ENCODE measurements at regions of chr12 and their contacts with region 1.

Region 1: GRCh38 chr12:68510397-68510796 is 100.3 kb upstream of the RAP1B start:
- DNase-seq: no peak
- ATAC-seq: no peak
- H3K4me3 ChIP-seq: no peak overlapping the region
- H3K4me3 Mint-ChIP-seq: no peak overlapping the region
- H3K27ac ChIP-seq: no peak overlapping the region
- H3K27ac Mint-ChIP-seq: no peak overlapping the region
- H3K4me1 ChIP-seq: no peaks in the 10 kb centered on the region
- H3K4me1 Mint-ChIP-seq: no peaks in the 10 kb centered on the region
- H3K27me3 ChIP-seq: no peaks in the 10 kb centered on the region
- H3K27me3 Mint-ChIP-seq: no peaks in the 10 kb centered on the region
- CTCF ChIP-seq: no peak

Region 2: DNA sequence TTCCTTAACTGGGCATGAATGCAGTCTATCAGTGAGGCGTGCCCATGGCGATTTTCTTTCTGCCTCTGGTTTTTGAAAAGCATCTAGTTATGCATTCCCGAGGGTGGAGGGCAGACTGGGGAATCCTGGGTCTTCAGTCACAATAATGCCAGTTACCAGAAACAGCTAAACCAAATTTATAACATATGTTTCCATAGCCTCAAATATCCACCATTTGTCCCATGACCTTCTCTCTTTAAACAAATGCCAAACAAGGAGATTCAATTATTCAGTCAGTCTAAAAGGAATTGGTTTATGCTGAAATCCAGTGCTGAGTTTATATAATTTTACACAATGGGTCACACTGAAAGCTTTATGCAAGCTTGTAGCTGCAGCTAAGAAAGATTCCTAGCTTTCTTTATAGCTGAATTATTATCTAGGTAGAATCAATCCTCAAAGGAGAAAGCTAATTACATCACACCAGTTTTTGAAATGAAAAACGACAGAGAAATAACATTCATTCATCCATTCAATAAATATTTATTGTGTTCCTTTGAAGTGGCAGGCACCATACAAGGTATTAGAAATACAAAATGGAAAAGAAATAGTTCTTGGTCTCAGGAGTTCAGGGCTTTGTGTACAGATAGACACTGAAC is 31.0 kb before region 1 on chr12:
- CTCF ChIA-PET with region 1: no interaction called
- POLR2A ChIA-PET with region 1: no interaction called
- intact Hi-C with region 1: loop called in 1 of 2 experiments (anchors 5 kb)
- DNase-seq: no peak
- ATAC-seq: no peak
- H3K4me3 ChIP-seq: no peak overlapping the region
- H3K4me3 Mint-ChIP-seq: no peak overlapping the region
- H3K27ac ChIP-seq: no peak overlapping the region
- H3K27ac Mint-ChIP-seq: no peak overlapping the region
- H3K4me1 ChIP-seq: peaks cover 20% of the 10 kb centered on the region
- H3K4me1 Mint-ChIP-seq: peaks cover 28% of the 10 kb centered on the region
- H3K27me3 ChIP-seq: no peaks in the 10 kb centered on the region
- H3K27me3 Mint-ChIP-seq: no peaks in the 10 kb centered on the region
- CTCF ChIP-seq: no peak